Right cardiac atrium (tissue), 5 donors: ENCODE measurements at regions of chr4 and their contacts with region 1.

Region 1: DNA sequence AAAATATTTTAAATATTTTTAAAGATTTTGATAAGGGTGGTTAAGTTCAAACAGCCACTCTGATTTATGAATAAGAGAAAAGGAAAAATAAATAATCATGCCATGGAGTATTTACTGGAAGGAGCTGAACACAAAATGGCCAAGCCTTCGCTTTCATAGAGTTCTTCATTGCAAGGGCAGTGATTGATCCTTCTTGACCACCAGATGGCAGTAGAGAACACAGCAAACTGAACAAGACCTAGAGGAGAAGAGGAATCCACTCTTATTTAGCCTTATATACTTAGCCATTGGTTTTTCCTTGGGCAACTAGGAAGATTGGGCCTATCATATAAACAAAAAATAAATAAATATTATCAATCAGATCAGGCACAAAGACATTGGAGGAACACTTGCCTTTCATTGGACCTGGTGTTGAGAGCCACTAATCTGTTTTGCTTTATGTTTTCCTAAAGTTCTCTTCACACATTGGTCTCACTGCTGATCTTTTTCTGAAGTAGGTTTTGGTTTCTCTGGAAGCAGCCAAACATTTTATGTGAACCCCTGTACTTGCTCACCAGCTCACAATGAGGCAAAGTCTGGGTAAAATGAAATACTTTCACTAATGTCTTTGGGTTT is 58.1 kb upstream of the PARM1 start:
- DNase-seq: no peak
- ATAC-seq: peak; percentile 89 to 91
- H3K4me3 ChIP-seq: no peak overlapping the region
- H3K27ac ChIP-seq: no peak overlapping the region
- H3K4me1 ChIP-seq: no peaks in the 10 kb centered on the region
- H3K27me3 ChIP-seq: no peaks in the 10 kb centered on the region

Region 2: DNA sequence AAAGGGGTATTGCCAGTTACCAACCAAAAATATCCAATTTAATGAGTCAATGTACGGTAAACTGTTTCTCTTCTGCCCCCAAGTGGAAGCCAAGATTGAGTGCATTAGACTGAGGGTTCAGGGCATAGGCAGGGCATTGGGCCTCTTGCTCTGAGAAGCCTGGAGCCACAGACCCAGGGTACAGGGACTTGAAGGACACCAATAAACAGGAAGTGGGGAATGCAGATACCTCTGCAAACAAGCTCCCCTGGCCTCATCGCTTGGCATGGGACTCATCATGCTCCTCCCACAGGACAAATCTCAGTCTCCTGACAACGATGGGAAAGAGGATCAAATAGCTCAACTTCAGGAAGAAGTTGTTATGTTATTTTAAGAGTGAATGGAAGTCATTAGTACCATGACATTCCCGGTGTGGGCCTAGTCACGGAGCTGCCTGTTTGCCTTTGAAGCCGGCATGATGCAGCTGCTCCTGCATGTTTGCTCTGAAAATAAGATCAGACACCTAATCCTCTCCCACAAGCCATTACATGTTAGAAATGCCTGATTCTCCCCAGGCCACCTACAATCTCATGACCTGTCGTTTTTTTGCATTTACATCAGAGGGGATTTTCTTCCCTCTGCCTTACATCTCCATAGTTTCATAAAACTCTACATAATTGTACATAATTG is 415.2 kb after region 1 on chr4:
- intact Hi-C with region 1: loop called in 1 of 4 experiments (anchors 10 kb)
- DNase-seq: no peak
- ATAC-seq: peak in 1 of 2 donors; percentile 36
- H3K4me3 ChIP-seq: no peak overlapping the region
- H3K27ac ChIP-seq: no peak overlapping the region
- H3K4me1 ChIP-seq: no peaks in the 10 kb centered on the region
- H3K27me3 ChIP-seq: no peaks in the 10 kb centered on the region

Region 3: DNA sequence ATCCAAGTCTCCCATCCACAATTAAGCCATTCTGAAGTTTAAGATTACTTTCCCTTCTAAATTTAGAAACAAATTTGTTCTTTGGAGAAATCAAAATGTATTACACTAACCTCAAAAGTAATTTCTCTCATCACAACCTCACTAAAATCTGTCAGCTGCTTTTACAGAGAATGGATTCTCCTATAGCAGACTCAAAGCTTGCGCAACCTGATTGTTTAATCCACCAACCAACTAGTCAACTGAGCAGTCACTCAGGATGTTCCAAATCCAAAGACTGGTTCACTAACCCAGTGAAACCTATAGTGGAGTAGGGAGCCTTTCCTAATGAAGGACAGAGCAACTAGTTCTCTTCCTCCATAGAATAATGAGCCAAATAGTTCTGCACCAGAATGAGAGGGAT is 595.0 kb after region 1 on chr4:
- intact Hi-C with region 1: loop called in 1 of 4 experiments (anchors 5 kb)
- DNase-seq: no peak
- ATAC-seq: no peak
- H3K4me3 ChIP-seq: no peak overlapping the region
- H3K27ac ChIP-seq: no peak overlapping the region
- H3K4me1 ChIP-seq: no peaks in the 10 kb centered on the region
- H3K27me3 ChIP-seq: no peaks in the 10 kb centered on the region